CD4-positive, alpha-beta memory T cell (primary cell): ENCODE measurements at regions of chr5 and their contacts with region 1.

Region 1: GRCh38 chr5:131328536-131329285 is 64.9 kb downstream of the CDC42SE2 start:
- DNase-seq: no peak
- H3K4me3 ChIP-seq: no peak overlapping the region
- H3K4me3 Mint-ChIP-seq: peak overlapping the region in 4 of 8 donors; percentile 26 to 68 (median 42)
- H3K27ac ChIP-seq: no peak overlapping the region
- H3K27ac Mint-ChIP-seq: peak overlapping the region; percentile 38 to 96 (median 69)
- H3K4me1 ChIP-seq: peaks cover 76% of the 10 kb centered on the region
- H3K4me1 Mint-ChIP-seq: peaks cover 48 to 83% (median 66%) of the 10 kb centered on the region in 4 donors
- H3K27me3 ChIP-seq: no peaks in the 10 kb centered on the region
- H3K27me3 Mint-ChIP-seq: no peaks in the 10 kb centered on the region

Region 2: GRCh38 chr5:131042021-131042789 is 286.5 kb before region 1 on chr5:
- CTCF ChIA-PET with region 1: no interaction called
- POLR2A ChIA-PET with region 1: no interaction called
- intact Hi-C with region 1: no loop called
- DNase-seq: no peak
- H3K4me3 ChIP-seq: no peak overlapping the region
- H3K4me3 Mint-ChIP-seq: no peak overlapping the region
- H3K27ac ChIP-seq: no peak overlapping the region
- H3K27ac Mint-ChIP-seq: no peak overlapping the region
- H3K4me1 ChIP-seq: no peaks in the 10 kb centered on the region
- H3K4me1 Mint-ChIP-seq: no peaks in the 10 kb centered on the region
- H3K27me3 ChIP-seq: no peaks in the 10 kb centered on the region
- H3K27me3 Mint-ChIP-seq: peaks cover 1 to 2% of the 10 kb centered on the region in 2 donors

Region 3: DNA sequence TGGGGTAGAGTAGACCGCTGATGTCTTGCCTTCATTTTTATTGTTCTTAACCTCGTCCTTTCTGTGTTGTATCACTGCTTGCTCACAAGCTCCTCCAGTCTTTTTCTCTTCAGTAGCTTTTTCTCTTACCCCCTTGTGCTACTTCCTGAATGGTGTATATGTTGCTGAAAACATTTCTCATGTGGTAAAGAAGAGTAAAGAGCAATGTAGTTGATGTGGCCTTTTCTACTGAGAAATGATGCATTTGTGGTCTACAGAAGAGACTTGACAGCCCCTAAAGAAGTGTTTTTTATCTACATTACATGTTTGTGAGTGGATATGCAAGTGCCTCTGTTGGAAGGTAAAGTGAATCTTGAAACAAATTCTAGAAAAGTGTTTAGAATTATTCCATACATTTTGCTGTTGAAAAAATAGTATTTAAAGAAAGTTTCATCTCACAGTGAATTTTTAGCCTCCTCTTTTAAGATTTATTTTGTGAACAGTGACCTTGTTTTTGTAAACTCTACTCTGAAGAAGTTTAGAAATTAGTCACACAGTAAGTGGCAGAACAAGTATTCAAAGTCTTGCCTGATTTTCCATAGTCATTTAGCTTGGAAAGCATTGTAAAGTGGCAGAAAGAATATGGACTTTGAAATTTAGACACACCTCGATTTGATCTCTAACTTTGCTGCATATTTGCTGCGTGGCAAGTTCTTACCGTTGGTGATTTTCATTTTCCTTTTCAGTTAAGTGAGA is 47.4 kb before region 1 on chr5:
- CTCF ChIA-PET with region 1: interaction called, 4 read pairs
- POLR2A ChIA-PET with region 1: interaction called, 15 read pairs
- intact Hi-C with region 1: loop called (anchors 5 kb)
- DNase-seq: peak; percentile 57 to 89 (median 85)
- H3K4me3 ChIP-seq: peak overlapping the region; percentile 0 to 37
- H3K4me3 Mint-ChIP-seq: peak overlapping the region; percentile 57 to 90 (median 82)
- H3K27ac ChIP-seq: peak overlapping the region; percentile 63
- H3K27ac Mint-ChIP-seq: peak overlapping the region; percentile 71 to 95 (median 87)
- H3K4me1 ChIP-seq: peaks cover 89% of the 10 kb centered on the region
- H3K4me1 Mint-ChIP-seq: peaks cover 54 to 89% (median 73%) of the 10 kb centered on the region in 4 donors
- H3K27me3 ChIP-seq: no peaks in the 10 kb centered on the region
- H3K27me3 Mint-ChIP-seq: no peaks in the 10 kb centered on the region

Region 4: GRCh38 chr5:131289738-131290137 is 39.0 kb before region 1 on chr5:
- CTCF ChIA-PET with region 1: interaction called, 3 read pairs
- POLR2A ChIA-PET with region 1: no interaction called
- intact Hi-C with region 1: loop called (anchors 5 kb)
- DNase-seq: peak in 1 of 5 donors; percentile 52
- H3K4me3 ChIP-seq: peak overlapping the region in 1 of 2 donors; percentile 23
- H3K4me3 Mint-ChIP-seq: peak overlapping the region; percentile 81 to 88 (median 86)
- H3K27ac ChIP-seq: peak overlapping the region; percentile 56
- H3K27ac Mint-ChIP-seq: peak overlapping the region; percentile 86 to 98 (median 94)
- H3K4me1 ChIP-seq: peaks cover 90% of the 10 kb centered on the region
- H3K4me1 Mint-ChIP-seq: peaks cover 41 to 82% (median 60%) of the 10 kb centered on the region in 4 donors
- H3K27me3 ChIP-seq: no peaks in the 10 kb centered on the region
- H3K27me3 Mint-ChIP-seq: no peaks in the 10 kb centered on the region

Region 5: GRCh38 chr5:131316026-131316425 is 12.7 kb before region 1 on chr5:
- CTCF ChIA-PET with region 1: no interaction called
- POLR2A ChIA-PET with region 1: interaction called, 5 read pairs
- intact Hi-C with region 1: loop called (anchors 2 kb)
- DNase-seq: no peak
- H3K4me3 ChIP-seq: no peak overlapping the region
- H3K4me3 Mint-ChIP-seq: peak overlapping the region in 3 of 8 donors; percentile 9 to 44 (median 11)
- H3K27ac ChIP-seq: no peak overlapping the region
- H3K27ac Mint-ChIP-seq: peak overlapping the region; percentile 3 to 94 (median 32)
- H3K4me1 ChIP-seq: peaks cover 77% of the 10 kb centered on the region
- H3K4me1 Mint-ChIP-seq: peaks cover 58 to 88% (median 73%) of the 10 kb centered on the region in 4 donors
- H3K27me3 ChIP-seq: no peaks in the 10 kb centered on the region
- H3K27me3 Mint-ChIP-seq: no peaks in the 10 kb centered on the region

Region 6: GRCh38 chr5:131364507-131365050 is 35.9 kb after region 1 on chr5:
- CTCF ChIA-PET with region 1: no interaction called
- POLR2A ChIA-PET with region 1: interaction called, 3 read pairs
- intact Hi-C with region 1: loop called (anchors 5 kb)
- DNase-seq: peak in 3 of 5 donors; percentile 43 to 50 (median 48)
- H3K4me3 ChIP-seq: no peak overlapping the region
- H3K4me3 Mint-ChIP-seq: peak overlapping the region; percentile 14 to 73 (median 58)
- H3K27ac ChIP-seq: peak overlapping the region; percentile 4
- H3K27ac Mint-ChIP-seq: peak overlapping the region; percentile 56 to 97 (median 79)
- H3K4me1 ChIP-seq: peaks cover 86% of the 10 kb centered on the region
- H3K4me1 Mint-ChIP-seq: peaks cover 51 to 89% (median 72%) of the 10 kb centered on the region in 4 donors
- H3K27me3 ChIP-seq: no peaks in the 10 kb centered on the region
- H3K27me3 Mint-ChIP-seq: no peaks in the 10 kb centered on the region